Vagina (tissue), 2 donors: ENCODE measurements at regions of chr19 and their contacts with region 1.

Region 1: DNA sequence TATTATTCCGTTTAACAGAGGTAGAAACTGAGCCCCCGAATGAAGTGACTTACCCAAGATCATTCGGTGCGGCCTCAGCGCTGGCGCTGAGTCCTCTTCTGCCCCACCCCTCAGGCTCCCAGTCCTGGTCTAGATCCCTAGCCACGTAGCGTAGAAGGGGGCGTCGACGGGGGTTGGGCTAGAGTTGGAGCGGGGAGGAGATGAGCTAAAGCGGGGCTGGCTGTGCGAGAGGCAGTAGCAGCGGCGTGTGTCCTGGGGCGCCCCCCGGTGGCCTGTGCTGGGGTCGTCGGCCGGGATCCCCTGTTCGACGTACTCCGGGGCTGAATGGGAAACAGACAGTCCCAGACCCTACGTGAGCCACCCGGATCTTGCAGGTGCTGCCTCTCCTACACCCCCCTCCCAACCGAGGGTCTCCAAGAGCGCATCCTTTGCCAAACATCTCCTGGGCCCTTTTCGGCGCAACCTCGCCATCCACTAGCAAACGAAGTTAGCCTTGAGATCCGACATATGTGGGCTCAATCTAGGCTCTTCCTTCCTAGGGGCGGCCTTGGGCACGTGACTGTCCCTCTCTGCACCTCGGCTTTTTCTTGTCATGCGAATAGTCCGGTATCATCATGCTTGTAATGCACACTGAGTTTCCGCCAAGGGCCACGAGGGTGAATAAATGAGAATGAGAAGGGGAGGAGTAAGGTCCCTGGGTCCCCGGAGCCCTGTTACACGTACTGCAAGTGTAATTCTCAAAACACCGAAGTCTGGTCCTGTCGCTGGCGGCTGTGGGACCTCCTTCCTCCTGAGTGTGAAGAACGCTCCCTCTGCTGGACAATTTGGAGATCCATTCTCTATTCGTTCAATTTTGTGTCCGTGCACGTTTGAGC is 47.7 kb downstream of the CYP4F22 start:
- DNase-seq: peak in 1 of 2 donors; percentile 90
- H3K4me3 ChIP-seq: peak overlapping the region; percentile 27 to 35
- H3K27ac ChIP-seq: peak overlapping the region; percentile 50
- H3K4me1 ChIP-seq: peaks cover 22% of the 10 kb centered on the region
- H3K27me3 ChIP-seq: peaks cover 5% of the 10 kb centered on the region
- CTCF ChIP-seq: peak; percentile 66 to 93 (median 72)
- POLR2A ChIP-seq: no peak

Region 2: GRCh38 chr19:15091901-15092753 is 463.9 kb before region 1 on chr19:
- intact Hi-C with region 1: loop called (anchors 5 kb)
- DNase-seq: no peak
- H3K4me3 ChIP-seq: no peak overlapping the region
- H3K27ac ChIP-seq: no peak overlapping the region
- H3K4me1 ChIP-seq: no peaks in the 10 kb centered on the region
- H3K27me3 ChIP-seq: no peaks in the 10 kb centered on the region
- CTCF ChIP-seq: peak; percentile 32 to 83 (median 55)
- POLR2A ChIP-seq: no peak

Region 3: DNA sequence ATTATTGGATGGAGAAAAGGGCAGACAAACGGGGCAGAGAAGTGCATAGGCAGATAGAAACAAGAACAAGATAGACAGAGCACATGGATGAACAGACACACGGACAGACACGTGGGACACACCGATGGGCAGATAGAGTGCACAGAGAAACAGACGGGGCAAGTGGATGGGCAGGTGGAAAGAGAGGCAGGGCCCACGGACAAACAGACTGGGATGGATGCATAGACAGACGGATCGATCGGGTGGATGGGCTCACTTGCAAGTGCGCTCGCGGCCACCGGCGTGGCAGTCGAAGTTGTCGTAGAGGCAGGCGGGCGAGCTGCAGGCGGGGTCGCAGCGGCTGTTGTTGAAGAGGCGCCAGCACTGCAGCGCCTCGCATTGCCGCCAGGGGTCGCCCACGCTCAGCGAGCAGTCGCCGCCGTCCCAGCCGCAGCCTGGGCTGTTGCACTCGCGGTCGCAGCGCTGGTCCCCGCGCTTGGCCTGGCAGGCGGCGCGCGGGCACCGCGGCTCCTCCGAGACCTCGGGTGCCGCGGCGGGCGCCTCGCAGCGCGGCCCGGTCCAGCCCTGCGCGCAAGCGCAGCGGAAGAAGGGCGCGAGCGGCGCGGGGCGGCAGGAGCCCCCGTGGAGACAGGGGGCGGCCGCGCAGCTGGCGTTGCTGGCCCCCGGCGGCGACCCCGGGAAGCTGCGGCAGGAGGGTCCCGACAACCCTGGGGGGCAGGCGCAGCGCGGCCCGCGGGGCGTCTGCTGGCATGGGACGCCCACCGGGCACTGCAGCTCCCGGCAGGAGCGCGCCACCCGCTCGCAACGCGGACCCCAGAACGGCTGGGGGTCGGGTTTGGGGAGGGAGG is 378.5 kb before region 1 on chr19:
- intact Hi-C with region 1: loop called (anchors 5 kb)
- DNase-seq: no peak
- H3K4me3 ChIP-seq: peak overlapping the region in 1 of 2 donors; percentile 50
- H3K27ac ChIP-seq: peak overlapping the region; percentile 15
- H3K4me1 ChIP-seq: peaks cover 4% of the 10 kb centered on the region
- H3K27me3 ChIP-seq: no peaks in the 10 kb centered on the region
- CTCF ChIP-seq: peak; percentile 83 to 95 (median 95)
- POLR2A ChIP-seq: no peak

Region 4: GRCh38 chr19:15449620-15450527 is 106.1 kb before region 1 on chr19 and contains the start of gene WIZ:
- intact Hi-C with region 1: loop called (anchors 10 kb)
- DNase-seq: no peak
- H3K4me3 ChIP-seq: peak within 1 kb of the TSS; percentile 67 to 68
- H3K27ac ChIP-seq: peak within 1 kb of the TSS; percentile 78
- H3K4me1 ChIP-seq: peaks cover 25% of the 10 kb centered on the region
- H3K27me3 ChIP-seq: no peaks in the 10 kb centered on the region
- CTCF ChIP-seq: no peak
- POLR2A ChIP-seq: no peak
- total RNA-seq, gene WIZ: 44.4 TPM